ENCODE measurements at regions of chr10 and their contacts with region 1.

Region 1: DNA sequence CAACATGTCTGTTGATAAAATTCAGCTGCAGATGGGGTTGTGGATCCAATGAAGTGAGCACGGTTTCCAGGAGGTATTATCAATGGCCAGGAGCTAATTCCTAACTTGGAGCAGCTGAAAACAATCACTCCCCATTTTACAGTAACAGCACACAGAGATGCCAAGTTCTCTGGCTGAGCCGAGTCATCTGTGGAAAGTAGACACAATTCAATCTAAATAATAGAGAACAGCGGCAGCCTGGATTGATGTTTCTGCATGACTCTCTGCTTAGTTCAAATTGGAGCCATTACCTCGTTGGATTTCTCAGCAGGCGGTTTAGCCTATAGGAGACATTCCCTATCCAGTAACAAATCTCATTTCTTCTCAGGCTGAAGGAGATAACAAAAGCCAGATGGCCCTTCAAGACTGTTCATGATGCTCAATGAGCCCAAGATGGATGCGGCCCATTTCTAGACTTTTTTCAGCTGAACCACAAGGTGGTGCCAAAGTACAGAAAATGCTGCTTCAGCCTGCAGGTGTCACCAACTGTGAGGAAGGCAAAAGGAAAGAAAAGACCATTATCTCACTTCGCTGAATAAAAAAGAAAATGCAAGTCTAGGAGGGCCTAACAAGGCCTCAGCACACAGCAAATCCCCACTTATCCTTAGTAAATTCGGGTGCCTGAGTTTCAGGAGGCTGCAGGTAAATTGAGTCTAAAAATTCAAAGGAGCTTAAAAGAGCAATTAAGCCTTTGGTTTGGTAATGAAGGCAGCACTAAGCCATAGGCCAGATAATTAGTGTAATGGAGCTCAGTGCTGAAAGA is 83.7 kb downstream of the SLC16A9 start:
- DNase-seq: peak in 13 of 14 experiments; percentile 6 to 79 (median 26)
- ATAC-seq: peak; percentile 87
- H3K4me3 ChIP-seq: no peak overlapping the region
- H3K4me3 Mint-ChIP-seq: no peak overlapping the region
- H3K27ac ChIP-seq: no peak overlapping the region
- H3K27ac Mint-ChIP-seq: no peak overlapping the region
- H3K4me1 ChIP-seq: no peaks in the 10 kb centered on the region
- H3K4me1 Mint-ChIP-seq: no peaks in the 10 kb centered on the region
- H3K27me3 ChIP-seq: no peaks in the 10 kb centered on the region
- H3K27me3 Mint-ChIP-seq: peaks cover 2% of the 10 kb centered on the region
- CTCF ChIP-seq: peak; percentile 88

Region 2: DNA sequence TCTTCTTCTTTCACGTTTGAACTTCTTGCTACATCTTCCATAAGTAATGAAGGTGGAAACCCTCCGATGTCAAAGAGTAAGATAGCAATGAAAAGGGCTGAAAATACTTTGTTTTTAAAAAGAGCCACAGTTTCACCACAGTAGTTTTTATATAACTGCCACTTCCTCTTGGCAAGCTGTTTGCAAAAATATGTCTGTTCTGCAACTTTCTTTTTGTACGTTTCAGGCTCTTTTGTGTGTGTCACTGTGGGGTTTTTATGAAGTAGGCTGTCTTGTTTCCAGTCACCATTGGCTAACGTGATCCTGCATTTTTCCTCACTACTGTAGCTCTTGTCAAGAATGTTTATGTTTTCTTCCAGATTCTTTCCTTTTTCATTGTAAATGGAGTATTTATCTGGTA is 28.1 kb after region 1 on chr10:
- CTCF ChIA-PET with region 1: no interaction called
- POLR2A ChIA-PET with region 1: no interaction called
- intact Hi-C with region 1: no loop called
- DNase-seq: peak in 1 of 14 experiments; percentile 1
- ATAC-seq: no peak
- H3K4me3 ChIP-seq: no peak overlapping the region
- H3K4me3 Mint-ChIP-seq: no peak overlapping the region
- H3K27ac ChIP-seq: no peak overlapping the region
- H3K27ac Mint-ChIP-seq: no peak overlapping the region
- H3K4me1 ChIP-seq: no peaks in the 10 kb centered on the region
- H3K4me1 Mint-ChIP-seq: peaks cover 9% of the 10 kb centered on the region
- H3K27me3 ChIP-seq: no peaks in the 10 kb centered on the region
- H3K27me3 Mint-ChIP-seq: peaks cover 4% of the 10 kb centered on the region
- CTCF ChIP-seq: no peak

Region 3: GRCh38 chr10:59814878-59815277 is 189.0 kb after region 1 on chr10:
- CTCF ChIA-PET with region 1: no interaction called
- POLR2A ChIA-PET with region 1: no interaction called
- intact Hi-C with region 1: loop called (anchors 5 to 10 kb)
- DNase-seq: no peak
- ATAC-seq: no peak
- H3K4me3 ChIP-seq: no peak overlapping the region
- H3K4me3 Mint-ChIP-seq: no peak overlapping the region
- H3K27ac ChIP-seq: no peak overlapping the region
- H3K27ac Mint-ChIP-seq: no peak overlapping the region
- H3K4me1 ChIP-seq: no peaks in the 10 kb centered on the region
- H3K4me1 Mint-ChIP-seq: peaks cover 9% of the 10 kb centered on the region
- H3K27me3 ChIP-seq: no peaks in the 10 kb centered on the region
- H3K27me3 Mint-ChIP-seq: no peaks in the 10 kb centered on the region
- CTCF ChIP-seq: no peak

Region 4: GRCh38 chr10:60032723-60033122 is 406.8 kb after region 1 on chr10:
- CTCF ChIA-PET with region 1: no interaction called
- POLR2A ChIA-PET with region 1: no interaction called
- intact Hi-C with region 1: loop called (anchors 1 to 5 kb)
- DNase-seq: peak in 7 of 14 experiments; percentile 3 to 62 (median 32)
- ATAC-seq: no peak
- H3K4me3 ChIP-seq: no peak overlapping the region
- H3K4me3 Mint-ChIP-seq: no peak overlapping the region
- H3K27ac ChIP-seq: no peak overlapping the region
- H3K27ac Mint-ChIP-seq: no peak overlapping the region
- H3K4me1 ChIP-seq: no peaks in the 10 kb centered on the region
- H3K4me1 Mint-ChIP-seq: no peaks in the 10 kb centered on the region
- H3K27me3 ChIP-seq: no peaks in the 10 kb centered on the region
- H3K27me3 Mint-ChIP-seq: no peaks in the 10 kb centered on the region
- CTCF ChIP-seq: no peak

Region 5: DNA sequence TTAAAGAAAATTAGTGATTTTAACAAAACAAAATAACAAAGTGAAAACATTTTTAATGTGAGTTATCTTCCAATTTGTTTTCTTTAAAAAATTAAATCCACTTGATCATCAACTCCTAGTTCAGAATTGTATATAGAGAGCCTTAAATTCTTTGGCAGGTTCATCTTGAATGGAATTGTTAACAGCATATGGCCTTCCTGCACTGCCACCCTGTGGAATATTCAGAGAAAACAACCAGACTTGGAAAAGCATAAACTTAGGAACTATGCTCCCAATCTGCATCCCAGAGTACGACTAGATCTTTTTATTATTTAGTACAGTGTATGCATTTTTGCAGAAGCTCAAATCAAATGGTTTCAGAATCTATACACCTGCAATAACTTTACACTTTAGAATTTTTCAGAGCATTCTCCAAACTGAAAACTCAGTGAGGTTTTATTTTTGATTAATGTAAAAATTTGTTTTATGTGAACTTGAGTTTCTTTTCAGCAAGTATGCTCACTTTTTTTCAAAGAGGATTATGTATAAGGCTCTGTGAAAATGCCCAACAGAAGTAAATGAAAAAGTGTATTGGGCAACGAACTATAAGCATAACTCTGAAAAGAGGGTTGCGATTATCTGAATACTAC is 808.6 kb after region 1 on chr10:
- CTCF ChIA-PET with region 1: no interaction called
- POLR2A ChIA-PET with region 1: no interaction called
- intact Hi-C with region 1: loop called (anchors 1 to 2 kb)
- DNase-seq: peak in 3 of 14 experiments; percentile 14 to 26 (median 25)
- ATAC-seq: no peak
- H3K4me3 ChIP-seq: no peak overlapping the region
- H3K4me3 Mint-ChIP-seq: no peak overlapping the region
- H3K27ac ChIP-seq: no peak overlapping the region
- H3K27ac Mint-ChIP-seq: no peak overlapping the region
- H3K4me1 ChIP-seq: no peaks in the 10 kb centered on the region
- H3K4me1 Mint-ChIP-seq: no peaks in the 10 kb centered on the region
- H3K27me3 ChIP-seq: no peaks in the 10 kb centered on the region
- H3K27me3 Mint-ChIP-seq: no peaks in the 10 kb centered on the region
- CTCF ChIP-seq: peak; percentile 54

Region 6: GRCh38 chr10:60778214-60779029 is 1152.5 kb after region 1 on chr10 and contains the start of gene CDK1:
- CTCF ChIA-PET with region 1: no interaction called
- POLR2A ChIA-PET with region 1: no interaction called
- intact Hi-C with region 1: loop called in 1 of 2 experiments (anchors 5 kb)
- DNase-seq: peak; percentile 89 to 98 (median 94)
- ATAC-seq: peak; percentile 97
- H3K4me3 ChIP-seq: peak within 1 kb of the TSS; percentile 67
- H3K4me3 Mint-ChIP-seq: peak within 1 kb of the TSS; percentile 98
- H3K27ac ChIP-seq: no peak within 1 kb of the TSS
- H3K27ac Mint-ChIP-seq: peak within 1 kb of the TSS; percentile 22
- H3K4me1 ChIP-seq: peaks cover 5% of the 10 kb centered on the region
- H3K4me1 Mint-ChIP-seq: peaks cover 11% of the 10 kb centered on the region
- H3K27me3 ChIP-seq: no peaks in the 10 kb centered on the region
- H3K27me3 Mint-ChIP-seq: no peaks in the 10 kb centered on the region
- CTCF ChIP-seq: no peak
- total RNA-seq, gene CDK1: 0.75 to 1.1 TPM

Measured in CD4-positive, alpha-beta T cell (primary cell).